OCI-LY7 (cell line): ENCODE measurements at regions of chr7 and their contacts with region 1.

Region 1: DNA sequence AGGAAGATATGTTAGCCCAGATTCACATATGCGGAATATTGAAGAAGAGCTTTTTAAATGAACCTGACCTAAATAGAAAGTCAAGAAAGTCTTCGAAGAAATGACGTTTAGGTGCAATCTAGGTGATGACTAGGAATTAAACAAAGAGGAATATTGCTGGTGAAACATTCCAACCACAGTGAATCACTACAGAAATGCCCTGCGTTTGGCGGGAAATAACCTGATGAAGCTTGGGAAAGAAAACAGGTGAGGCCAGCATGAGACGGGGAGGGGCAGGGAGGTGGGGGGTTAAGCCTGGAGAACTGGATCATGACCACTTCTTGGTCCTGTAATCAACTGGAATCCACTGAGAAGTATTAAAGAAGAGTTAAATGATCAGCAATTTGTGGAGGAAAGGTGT is 299.4 kb upstream of the VSTM2A start:
- DNase-seq: no peak
- H3K4me3 ChIP-seq: no peak overlapping the region
- H3K27ac ChIP-seq: no peak overlapping the region
- H3K4me1 ChIP-seq: no peaks in the 10 kb centered on the region
- CTCF ChIP-seq: no peak

Region 2: GRCh38 chr7:54076616-54077015 is 166.2 kb before region 1 on chr7:
- CTCF ChIA-PET with region 1: no interaction called
- POLR2A ChIA-PET with region 1: no interaction called
- intact Hi-C with region 1: no loop called
- DNase-seq: no peak
- H3K4me3 ChIP-seq: no peak overlapping the region
- H3K27ac ChIP-seq: no peak overlapping the region
- H3K4me1 ChIP-seq: no peaks in the 10 kb centered on the region
- CTCF ChIP-seq: no peak

Region 3: GRCh38 chr7:54339073-54339472 is 96.3 kb after region 1 on chr7:
- CTCF ChIA-PET with region 1: no interaction called
- POLR2A ChIA-PET with region 1: no interaction called
- intact Hi-C with region 1: loop called (anchors 10 kb)
- DNase-seq: no peak
- H3K4me3 ChIP-seq: no peak overlapping the region
- H3K27ac ChIP-seq: no peak overlapping the region
- H3K4me1 ChIP-seq: no peaks in the 10 kb centered on the region
- CTCF ChIP-seq: no peak

Region 4: DNA sequence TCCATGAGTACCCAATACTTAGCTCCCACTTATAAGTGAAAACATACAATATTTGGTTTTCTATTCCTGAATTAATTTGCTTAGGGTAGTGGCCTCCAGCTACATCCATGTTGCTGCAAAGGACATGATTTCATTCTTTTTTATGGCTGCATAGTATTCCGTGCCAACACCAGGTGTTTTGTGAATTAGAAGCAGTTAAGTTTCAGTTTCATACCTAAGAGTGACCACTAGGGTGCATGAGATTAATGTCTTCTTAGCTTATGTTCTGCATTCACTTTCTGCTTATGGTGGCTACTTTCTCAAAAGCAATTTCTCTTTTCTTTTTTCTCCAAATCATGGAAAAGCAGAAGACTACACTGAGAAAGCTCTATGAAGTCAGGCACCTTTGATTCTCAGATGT is 234.3 kb after region 1 on chr7:
- CTCF ChIA-PET with region 1: no interaction called
- POLR2A ChIA-PET with region 1: no interaction called
- intact Hi-C with region 1: no loop called
- DNase-seq: peak; percentile 1
- H3K4me3 ChIP-seq: no peak overlapping the region
- H3K27ac ChIP-seq: no peak overlapping the region
- H3K4me1 ChIP-seq: no peaks in the 10 kb centered on the region
- CTCF ChIP-seq: peak; percentile 30; the same call in 1 of the 2 replicates

Region 5: GRCh38 chr7:54565432-54565831 is 322.7 kb after region 1 on chr7:
- CTCF ChIA-PET with region 1: no interaction called
- POLR2A ChIA-PET with region 1: no interaction called
- intact Hi-C with region 1: no loop called
- DNase-seq: no peak
- H3K4me3 ChIP-seq: no peak overlapping the region
- H3K27ac ChIP-seq: no peak overlapping the region
- H3K4me1 ChIP-seq: no peaks in the 10 kb centered on the region
- CTCF ChIP-seq: no peak